ENCODE measurements at regions of chr9 and their contacts with region 1.

Region 1: DNA sequence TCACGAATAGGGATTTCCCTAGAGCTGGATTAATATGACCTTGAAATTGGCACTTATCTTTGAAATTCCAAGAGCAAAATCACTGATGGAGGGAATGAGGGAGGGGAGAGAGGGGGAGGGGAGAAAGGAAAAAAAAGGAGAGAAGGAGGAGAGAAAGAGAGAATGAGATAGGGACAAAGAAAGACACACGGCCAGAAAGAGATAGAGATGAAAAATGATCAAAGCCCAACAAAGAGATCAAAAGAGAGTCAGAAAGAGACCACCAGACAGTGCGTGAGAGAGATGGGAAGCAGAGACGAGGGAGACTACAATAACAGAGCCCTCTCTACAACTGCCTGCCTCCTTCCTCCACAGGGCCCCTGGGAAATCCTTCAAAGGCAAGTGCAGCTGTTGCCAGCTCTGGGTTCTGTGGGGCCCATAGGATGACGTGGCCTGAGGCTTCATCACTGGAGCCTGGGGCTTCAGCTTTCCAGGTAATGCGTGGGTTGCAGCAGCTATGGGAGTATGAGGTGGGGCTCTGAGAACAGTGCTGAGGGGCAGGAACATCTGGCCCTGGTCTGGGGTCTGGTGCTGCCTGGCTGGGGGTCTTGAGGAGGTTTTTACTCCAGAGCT is 58.4 kb upstream of the SHB start:
- DNase-seq: no peak

Region 2: DNA sequence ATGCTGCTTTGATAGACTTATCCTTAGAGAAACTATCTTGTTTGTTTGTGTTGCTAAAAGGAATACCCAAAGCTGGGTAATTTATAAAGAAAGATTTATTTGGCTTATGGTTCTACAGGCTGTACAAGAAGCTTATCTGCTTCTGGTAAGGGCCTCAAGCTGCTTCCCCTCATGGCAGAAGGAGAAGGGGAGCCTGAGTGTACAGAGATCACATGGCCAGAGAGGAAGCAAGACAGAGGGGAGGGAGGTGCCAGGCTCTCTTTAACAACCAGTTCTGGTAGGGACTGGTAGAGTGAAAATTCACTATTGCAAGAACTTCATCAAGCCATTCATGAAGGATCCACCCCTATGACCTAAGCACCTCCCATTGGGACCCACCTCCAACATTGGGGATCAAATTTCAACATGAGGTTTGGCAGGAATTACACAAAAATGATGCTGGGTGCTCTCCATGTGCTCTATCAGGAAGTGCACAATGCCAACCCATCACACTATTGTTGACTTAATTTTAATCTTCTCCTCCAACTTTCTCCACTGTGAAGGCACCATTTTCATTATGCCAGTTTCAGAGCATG is 56.7 kb after region 1 on chr9:
- intact Hi-C with region 1: no loop called
- DNase-seq: no peak

Region 3: GRCh38 chr9:38294220-38294960 is 167.0 kb after region 1 on chr9:
- intact Hi-C with region 1: loop called (anchors 10 kb)
- DNase-seq: no peak

Region 4: GRCh38 chr9:38318759-38319495 is 191.6 kb after region 1 on chr9:
- intact Hi-C with region 1: no loop called
- DNase-seq: no peak